A673 (cell line): ENCODE measurements at regions of chr3 and their contacts with region 1.

Region 1: DNA sequence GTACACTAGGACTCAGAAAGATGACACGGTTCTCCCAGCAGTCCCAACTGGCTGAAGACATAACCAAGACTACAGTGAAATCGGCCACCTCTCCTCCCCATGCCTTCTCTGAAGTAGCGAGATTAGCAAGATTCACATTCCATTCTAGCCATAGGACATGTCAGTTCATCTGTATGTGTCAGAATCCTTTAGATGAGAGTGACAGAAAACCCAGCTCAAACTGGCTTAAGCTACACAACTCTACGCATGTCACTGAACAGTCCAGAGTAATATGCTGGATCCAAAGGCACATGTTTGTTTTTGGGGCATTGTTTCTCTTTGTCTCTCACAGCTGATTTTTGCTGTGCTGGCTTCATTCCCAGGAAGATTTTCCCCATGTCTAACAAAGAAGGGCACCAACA is 75.8 kb downstream of the RARB start:
- DNase-seq: peak; percentile 64
- H3K4me3 ChIP-seq: peak overlapping the region; percentile 16
- H3K27ac ChIP-seq: peak overlapping the region; percentile 46
- H3K4me1 ChIP-seq: peaks cover 30% of the 10 kb centered on the region
- H3K27me3 ChIP-seq: no peaks in the 10 kb centered on the region
- CTCF ChIP-seq: no peak

Region 2: DNA sequence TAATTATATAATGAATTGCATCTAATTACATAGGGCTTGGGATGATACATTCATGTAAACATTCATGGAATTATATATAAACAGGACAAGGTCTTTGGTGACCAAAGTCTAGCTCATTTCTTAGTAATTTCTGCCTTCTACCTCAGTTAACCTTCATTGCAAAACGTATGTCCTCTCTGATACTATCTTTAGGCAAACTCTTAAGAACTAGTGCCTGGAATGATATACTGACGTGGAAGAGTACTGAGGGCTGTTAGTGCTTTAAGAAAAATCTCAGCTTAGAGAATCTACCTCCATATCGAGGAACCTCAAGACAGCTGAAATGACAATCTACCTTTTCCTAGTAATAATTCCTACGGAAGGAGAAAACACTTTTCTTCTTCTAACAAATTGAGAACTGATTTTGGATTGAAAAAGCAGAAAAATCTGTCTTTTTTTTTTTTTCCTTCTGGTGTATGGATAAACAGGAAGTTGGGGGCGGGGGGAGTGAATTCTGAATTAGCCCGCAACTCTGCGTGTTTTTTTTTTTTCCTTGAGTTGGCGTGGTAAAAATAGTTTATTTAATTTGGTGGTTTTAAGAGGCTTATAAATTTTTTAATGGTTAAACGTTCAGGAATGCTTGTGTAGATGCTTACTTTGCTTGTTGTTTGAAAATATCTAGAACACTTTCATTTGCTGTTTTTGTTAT is 32.7 kb before region 1 on chr3:
- CTCF ChIA-PET with region 1: interaction called, 8 read pairs
- POLR2A ChIA-PET with region 1: no interaction called
- intact Hi-C with region 1: loop called (anchors 2 kb)
- DNase-seq: peak; percentile 22
- H3K4me3 ChIP-seq: peak overlapping the region; percentile 28
- H3K27ac ChIP-seq: no peak overlapping the region
- H3K4me1 ChIP-seq: peaks cover 36% of the 10 kb centered on the region
- H3K27me3 ChIP-seq: no peaks in the 10 kb centered on the region
- CTCF ChIP-seq: no peak

Region 3: GRCh38 chr3:26015752-26016151 is 511.9 kb after region 1 on chr3:
- CTCF ChIA-PET with region 1: no interaction called
- POLR2A ChIA-PET with region 1: no interaction called
- intact Hi-C with region 1: no loop called
- DNase-seq: no peak
- H3K4me3 ChIP-seq: no peak overlapping the region
- H3K27ac ChIP-seq: no peak overlapping the region
- H3K4me1 ChIP-seq: no peaks in the 10 kb centered on the region
- H3K27me3 ChIP-seq: no peaks in the 10 kb centered on the region
- CTCF ChIP-seq: no peak